ENCODE measurements at regions of chr10 and their contacts with region 1.

Region 1: DNA sequence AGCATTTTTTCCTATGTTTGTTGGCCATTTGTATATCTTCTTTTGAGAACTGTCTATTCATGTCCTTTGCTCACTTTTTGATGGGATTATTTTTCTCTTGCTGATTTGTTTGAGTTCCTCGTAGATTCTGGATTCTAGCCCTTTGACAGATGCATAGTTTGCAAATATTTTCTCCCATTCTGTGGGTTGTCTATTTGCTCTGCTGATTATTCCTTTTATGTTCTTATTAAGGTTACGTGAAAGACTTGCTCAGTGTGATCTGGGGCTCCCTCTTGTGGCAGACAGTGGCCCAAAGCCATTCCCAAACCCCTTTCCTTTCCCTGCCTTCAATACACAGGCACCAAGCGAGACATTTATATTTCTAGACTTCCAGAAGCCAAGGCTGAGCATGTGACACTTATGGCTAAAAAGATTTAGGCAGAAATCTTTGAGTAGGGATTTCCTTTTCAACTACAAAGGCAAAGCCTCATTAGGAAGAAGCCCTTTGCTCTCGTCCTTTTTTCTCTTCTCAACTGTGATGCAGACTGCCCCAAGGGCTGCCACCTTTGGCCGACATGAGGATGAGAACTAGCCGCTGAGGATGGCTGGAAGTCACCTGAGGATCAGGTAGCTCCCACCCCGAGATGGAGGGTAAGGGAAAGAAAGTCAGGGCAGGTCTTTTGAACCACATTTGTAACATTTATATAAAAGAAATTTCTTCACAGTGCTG is 23.6 kb downstream of the ST8SIA6 start:
- DNase-seq: peak; percentile 34 to 82 (median 64)
- H3K4me3 ChIP-seq: peak overlapping the region in 8 of 59 donors; percentile 0 to 17 (median 6)
- H3K27ac ChIP-seq: peak overlapping the region in 16 of 59 donors; percentile 5 to 75 (median 48)
- H3K27me3 ChIP-seq: peaks cover 0 to 67% (median 13%) of the 10 kb centered on the region in 45 donors
- CTCF ChIP-seq: peak; percentile 67 to 93 (median 81)

Region 2: DNA sequence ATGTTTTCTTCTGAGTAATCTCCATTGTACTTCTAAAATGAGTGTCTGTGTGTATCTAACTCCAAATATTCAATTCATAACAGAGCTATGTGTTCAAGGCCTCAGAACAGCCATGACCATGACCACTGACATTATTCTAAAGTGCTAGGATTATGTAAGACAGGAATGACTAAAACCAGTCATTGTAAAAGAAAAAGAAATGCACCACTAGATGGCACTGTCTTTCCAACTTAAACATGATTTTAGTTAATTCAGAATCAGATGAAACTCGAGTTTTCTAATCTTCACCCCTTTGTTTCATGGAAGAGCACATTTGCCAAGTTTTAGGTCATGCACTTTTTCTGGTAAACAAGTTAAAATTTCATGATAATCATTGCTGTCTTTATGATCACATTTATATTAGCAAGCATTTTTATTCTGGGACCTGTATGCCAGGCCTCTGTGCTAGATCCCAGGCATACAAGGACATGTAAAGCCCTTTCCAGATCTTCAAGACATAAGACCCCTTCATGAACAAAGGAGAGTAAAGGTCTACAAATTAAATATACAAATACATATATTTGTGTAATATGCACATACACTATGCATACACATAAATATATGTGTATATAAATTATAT is 587.4 kb before region 1 on chr10:
- intact Hi-C with region 1: loop called (anchors 5 kb)
- DNase-seq: no peak
- H3K4me3 ChIP-seq: no peak overlapping the region
- H3K27ac ChIP-seq: peak overlapping the region in 1 of 59 donors; percentile 6
- H3K27me3 ChIP-seq: no peaks in the 10 kb centered on the region
- CTCF ChIP-seq: peak; percentile 70 to 93 (median 84)